ENCODE measurements at regions of chr9 and their contacts with region 1.

Region 1: GRCh38 chr9:19408693-19409400 is at the start of gene ACER2:
- DNase-seq: peak; percentile 96
- H3K4me3 Mint-ChIP-seq: peak within 1 kb of the TSS; percentile 95
- H3K27ac Mint-ChIP-seq: peak within 1 kb of the TSS; percentile 71
- H3K4me1 Mint-ChIP-seq: peaks cover 12% of the 10 kb centered on the region
- H3K27me3 Mint-ChIP-seq: no peaks in the 10 kb centered on the region
- total RNA-seq, gene ACER2: 1.8 TPM

Region 2: GRCh38 chr9:19271076-19271475 is 137.8 kb before region 1 on chr9:
- CTCF ChIA-PET with region 1: no interaction called
- POLR2A ChIA-PET with region 1: no interaction called
- intact Hi-C with region 1: loop called (anchors 1 kb)
- DNase-seq: no peak
- H3K4me3 Mint-ChIP-seq: no peak overlapping the region
- H3K27ac Mint-ChIP-seq: no peak overlapping the region
- H3K4me1 Mint-ChIP-seq: peaks cover 40% of the 10 kb centered on the region
- H3K27me3 Mint-ChIP-seq: no peaks in the 10 kb centered on the region

Region 3: DNA sequence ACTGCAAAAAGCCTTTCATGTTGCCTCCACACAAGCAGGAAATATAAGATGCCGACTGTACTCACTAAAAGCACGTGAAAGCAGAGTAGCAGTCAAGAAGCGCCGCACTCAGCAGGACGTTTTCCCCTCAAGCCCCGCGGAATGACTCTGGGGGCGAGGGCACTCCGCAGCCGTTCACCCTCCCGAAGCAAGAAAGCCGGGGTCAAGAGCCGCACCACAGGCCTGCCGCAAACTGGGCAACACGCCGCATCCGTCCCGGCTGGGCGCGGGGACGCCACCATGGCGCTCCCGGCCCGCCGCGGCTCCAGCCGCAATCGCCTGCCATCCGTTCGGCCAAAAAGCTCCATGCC is 29.2 kb before region 1 on chr9:
- CTCF ChIA-PET with region 1: no interaction called
- POLR2A ChIA-PET with region 1: interaction called, 8 read pairs
- intact Hi-C with region 1: loop called (anchors 1 kb)
- DNase-seq: no peak
- H3K4me3 Mint-ChIP-seq: peak overlapping the region; percentile 100
- H3K27ac Mint-ChIP-seq: peak overlapping the region; percentile 100
- H3K4me1 Mint-ChIP-seq: peaks cover 50% of the 10 kb centered on the region
- H3K27me3 Mint-ChIP-seq: peaks cover 3% of the 10 kb centered on the region

Region 4: GRCh38 chr9:19429595-19429994 is 20.7 kb after region 1 on chr9:
- CTCF ChIA-PET with region 1: no interaction called
- POLR2A ChIA-PET with region 1: no interaction called
- intact Hi-C with region 1: no loop called
- DNase-seq: no peak
- H3K4me3 Mint-ChIP-seq: no peak overlapping the region
- H3K27ac Mint-ChIP-seq: no peak overlapping the region
- H3K4me1 Mint-ChIP-seq: no peaks in the 10 kb centered on the region
- H3K27me3 Mint-ChIP-seq: no peaks in the 10 kb centered on the region

Measured in activated CD4-positive, alpha-beta memory T cell treated with anti-CD3 and anti-CD28 coated beads for 36 hours (primary cell).